ENCODE measurements at regions of chr19 and their contacts with region 1.

Region 1: GRCh38 chr19:51422053-51422448 is 4.6 kb upstream of the SIGLEC10 start:
- DNase-seq: peak; percentile 93
- ATAC-seq: peak; percentile 78
- H3K4me3 Mint-ChIP-seq: no peak overlapping the region
- H3K27ac Mint-ChIP-seq: no peak overlapping the region
- H3K4me1 Mint-ChIP-seq: peaks cover 22% of the 10 kb centered on the region
- H3K27me3 Mint-ChIP-seq: peaks cover 20% of the 10 kb centered on the region
- CTCF ChIP-seq: peak; percentile 100

Region 2: GRCh38 chr19:51338563-51339312 is 83.3 kb before region 1 on chr19:
- CTCF ChIA-PET with region 1: interaction called, 15 read pairs
- POLR2A ChIA-PET with region 1: no interaction called
- intact Hi-C with region 1: loop called (anchors 10 kb)
- DNase-seq: peak; percentile 95
- ATAC-seq: peak; percentile 74
- H3K4me3 Mint-ChIP-seq: peak overlapping the region; percentile 77
- H3K27ac Mint-ChIP-seq: peak overlapping the region; percentile 82
- H3K4me1 Mint-ChIP-seq: peaks cover 13% of the 10 kb centered on the region
- H3K27me3 Mint-ChIP-seq: peaks cover 1% of the 10 kb centered on the region
- CTCF ChIP-seq: peak; percentile 93

Region 3: GRCh38 chr19:51407511-51408131 is 14.4 kb before region 1 on chr19:
- CTCF ChIA-PET with region 1: interaction called, 10 read pairs
- POLR2A ChIA-PET with region 1: interaction called, 4 read pairs
- intact Hi-C with region 1: no loop called
- DNase-seq: peak; percentile 63
- ATAC-seq: peak; percentile 85
- H3K4me3 Mint-ChIP-seq: no peak overlapping the region
- H3K27ac Mint-ChIP-seq: no peak overlapping the region
- H3K4me1 Mint-ChIP-seq: peaks cover 9% of the 10 kb centered on the region
- H3K27me3 Mint-ChIP-seq: peaks cover 17% of the 10 kb centered on the region
- CTCF ChIP-seq: peak; percentile 48

Region 4: GRCh38 chr19:51514866-51515481 is 92.9 kb after region 1 on chr19:
- CTCF ChIA-PET with region 1: interaction called, 14 read pairs
- POLR2A ChIA-PET with region 1: no interaction called
- intact Hi-C with region 1: loop called (anchors 2 kb)
- DNase-seq: peak; percentile 32
- ATAC-seq: peak; percentile 53
- H3K4me3 Mint-ChIP-seq: no peak overlapping the region
- H3K27ac Mint-ChIP-seq: no peak overlapping the region
- H3K4me1 Mint-ChIP-seq: peaks cover 6% of the 10 kb centered on the region
- H3K27me3 Mint-ChIP-seq: peaks cover 17% of the 10 kb centered on the region
- CTCF ChIP-seq: peak; percentile 80

Region 5: GRCh38 chr19:51654783-51655182 is 232.7 kb after region 1 on chr19:
- CTCF ChIA-PET with region 1: interaction called, 12 read pairs
- POLR2A ChIA-PET with region 1: no interaction called
- intact Hi-C with region 1: loop called (anchors 5 kb)
- DNase-seq: no peak
- ATAC-seq: no peak
- H3K4me3 Mint-ChIP-seq: no peak overlapping the region
- H3K27ac Mint-ChIP-seq: no peak overlapping the region
- H3K4me1 Mint-ChIP-seq: peaks cover 5% of the 10 kb centered on the region
- H3K27me3 Mint-ChIP-seq: peaks cover 30% of the 10 kb centered on the region
- CTCF ChIP-seq: no peak